IMR-90 (cell line): ENCODE measurements at regions of chr6 and their contacts with region 1.

Region 1: DNA sequence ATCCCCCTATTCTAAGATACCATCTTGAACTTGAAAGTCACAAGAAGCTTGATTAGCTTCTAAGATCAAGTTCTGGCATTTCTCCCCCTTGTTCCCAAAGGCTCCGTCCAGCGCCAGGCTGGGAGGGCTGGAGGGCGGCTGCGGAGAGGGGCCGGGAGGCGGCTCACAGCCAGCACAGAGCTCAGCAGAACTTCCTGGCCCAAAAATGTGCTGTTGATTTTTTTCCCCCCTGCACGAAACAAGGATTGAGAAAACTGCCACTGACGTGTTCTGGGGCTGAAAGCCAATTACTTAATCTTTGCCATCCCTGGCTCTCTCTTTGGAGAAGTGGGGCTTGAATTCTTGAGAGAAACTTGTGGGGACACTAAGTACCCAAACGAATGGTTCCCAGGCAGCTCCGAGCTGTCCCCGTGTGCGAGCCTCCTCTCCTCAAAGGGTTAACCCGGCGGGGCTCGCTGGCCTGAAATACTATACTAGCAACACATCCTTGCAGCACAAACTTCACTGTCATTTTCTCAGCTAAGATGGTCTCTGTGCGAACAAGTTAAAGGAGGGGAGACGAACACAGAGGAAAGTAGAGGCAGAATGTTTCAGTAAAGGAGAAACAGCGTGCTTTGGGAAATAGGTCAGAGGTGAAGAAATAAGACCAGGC is 452 bp downstream of the TRAF3IP2 start:
- DNase-seq: peak; percentile 86
- ATAC-seq: peak; percentile 42
- H3K4me3 ChIP-seq: peak overlapping the region; percentile 55
- H3K27ac ChIP-seq: peak overlapping the region; percentile 97
- H3K4me1 ChIP-seq: peaks cover 30% of the 10 kb centered on the region
- H3K27me3 ChIP-seq: no peaks in the 10 kb centered on the region
- CTCF ChIP-seq: no peak
- POLR2A ChIP-seq: no peak; the same call in 1 of the 2 replicates
- RAD21 ChIP-seq: peak; percentile 18; the same call in 1 of the 2 replicates

Region 2: GRCh38 chr6:111552241-111552744 is 52.9 kb before region 1 on chr6:
- CTCF ChIA-PET with region 1: no interaction called
- POLR2A ChIA-PET with region 1: no interaction called
- dilution Hi-C with region 1: no loop called
- in situ Hi-C with region 1: no loop called
- intact Hi-C with region 1: loop called (anchors 2 kb)
- DNase-seq: peak; percentile 98
- ATAC-seq: peak; percentile 87
- H3K4me3 ChIP-seq: no peak overlapping the region
- H3K27ac ChIP-seq: peak overlapping the region; percentile 72
- H3K4me1 ChIP-seq: peaks cover 20% of the 10 kb centered on the region
- H3K27me3 ChIP-seq: no peaks in the 10 kb centered on the region
- CTCF ChIP-seq: no peak
- POLR2A ChIP-seq: no peak
- RAD21 ChIP-seq: peak; percentile 22; the same call in 1 of the 2 replicates

Region 3: DNA sequence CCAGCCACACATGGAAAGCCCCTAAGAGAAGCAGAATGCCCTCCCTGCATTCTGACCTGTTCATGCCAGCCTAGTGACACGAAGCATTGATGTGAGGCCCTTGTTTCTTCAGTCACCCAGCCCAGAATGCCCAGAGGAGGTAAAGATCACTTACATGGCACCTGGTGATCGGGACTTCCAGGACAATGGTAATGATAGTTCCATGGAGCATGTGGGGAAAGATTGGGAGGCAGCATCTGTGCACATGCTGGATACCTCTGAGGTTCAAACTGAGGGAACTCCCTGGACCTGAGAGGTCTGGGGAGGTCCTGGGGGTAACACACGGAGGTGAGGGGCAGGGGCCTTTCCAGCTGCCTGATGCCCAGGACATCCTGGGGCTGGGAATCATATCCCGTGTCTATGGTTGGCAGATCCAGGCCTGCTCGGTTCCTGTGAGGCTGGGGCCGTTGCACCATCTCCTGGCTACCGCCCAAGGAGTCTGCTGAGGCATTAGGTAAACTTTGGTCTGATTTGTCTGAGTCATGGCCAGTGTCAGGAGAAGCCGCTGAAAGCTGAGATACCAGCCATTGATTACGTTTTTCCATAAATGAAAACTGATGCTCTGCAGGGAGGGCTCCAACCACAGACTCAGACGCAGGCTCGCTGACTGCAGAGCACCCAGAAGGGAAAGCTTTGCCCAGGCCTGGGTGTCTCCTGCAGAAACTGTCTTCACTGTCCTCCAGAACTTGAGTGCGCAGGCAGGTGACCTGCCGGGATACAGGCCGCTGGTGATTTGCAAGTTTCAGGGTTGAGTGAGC is 13.9 kb before region 1 on chr6:
- CTCF ChIA-PET with region 1: no interaction called
- POLR2A ChIA-PET with region 1: interaction called, 3 read pairs
- dilution Hi-C with region 1: no loop called
- in situ Hi-C with region 1: no loop called
- intact Hi-C with region 1: loop called (anchors 2 kb)
- DNase-seq: peak; percentile 100
- ATAC-seq: peak; percentile 89
- H3K4me3 ChIP-seq: no peak overlapping the region
- H3K27ac ChIP-seq: peak overlapping the region; percentile 93
- H3K4me1 ChIP-seq: peaks cover 29% of the 10 kb centered on the region
- H3K27me3 ChIP-seq: no peaks in the 10 kb centered on the region
- CTCF ChIP-seq: no peak
- POLR2A ChIP-seq: peak; percentile 62; the same call in 1 of the 2 replicates
- RAD21 ChIP-seq: peak; percentile 25